ENCODE measurements at regions of chr5 and their contacts with region 1.

Region 1: DNA sequence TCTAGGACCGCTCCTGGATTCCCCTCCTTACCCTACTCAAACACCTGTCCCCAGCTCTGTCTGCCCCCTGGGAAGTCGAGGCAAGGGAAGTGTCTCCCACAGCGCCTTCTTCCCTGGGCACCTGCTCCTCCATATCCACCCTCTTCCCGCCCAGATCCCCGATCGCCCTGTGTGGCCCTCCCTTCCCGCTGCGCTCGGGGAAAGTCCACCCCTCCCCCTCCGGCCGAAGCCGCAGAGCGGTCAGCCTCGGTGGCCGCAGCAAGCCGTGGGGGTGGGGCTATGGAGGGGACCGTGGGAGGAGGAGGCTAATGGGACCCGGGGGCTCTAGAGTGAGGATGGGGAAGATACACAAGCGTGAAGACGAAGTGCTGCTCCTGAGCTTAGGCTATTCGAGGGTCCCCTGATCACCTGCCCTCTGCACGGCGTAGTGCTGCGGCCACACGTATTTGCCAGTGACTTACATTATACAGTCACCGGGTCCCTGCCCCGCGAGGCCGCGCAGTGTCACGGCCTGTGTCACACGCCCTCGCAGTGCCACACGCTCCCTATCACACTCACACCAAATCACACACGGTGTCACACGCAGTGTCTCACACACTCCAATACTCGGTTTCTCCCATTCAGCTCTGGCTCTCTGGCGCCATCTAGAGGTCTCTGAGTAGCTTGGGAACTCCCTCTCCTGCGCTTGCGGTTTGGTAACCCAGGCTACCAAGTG is 658 bp upstream of the PCDH1 start:
- DNase-seq: peak; percentile 100
- H3K4me3 Mint-ChIP-seq: peak overlapping the region; percentile 80
- H3K27ac Mint-ChIP-seq: no peak overlapping the region
- H3K4me1 Mint-ChIP-seq: peaks cover 30% of the 10 kb centered on the region
- H3K27me3 Mint-ChIP-seq: peaks cover 55% of the 10 kb centered on the region
- CTCF ChIP-seq: peak; percentile 99

Region 2: DNA sequence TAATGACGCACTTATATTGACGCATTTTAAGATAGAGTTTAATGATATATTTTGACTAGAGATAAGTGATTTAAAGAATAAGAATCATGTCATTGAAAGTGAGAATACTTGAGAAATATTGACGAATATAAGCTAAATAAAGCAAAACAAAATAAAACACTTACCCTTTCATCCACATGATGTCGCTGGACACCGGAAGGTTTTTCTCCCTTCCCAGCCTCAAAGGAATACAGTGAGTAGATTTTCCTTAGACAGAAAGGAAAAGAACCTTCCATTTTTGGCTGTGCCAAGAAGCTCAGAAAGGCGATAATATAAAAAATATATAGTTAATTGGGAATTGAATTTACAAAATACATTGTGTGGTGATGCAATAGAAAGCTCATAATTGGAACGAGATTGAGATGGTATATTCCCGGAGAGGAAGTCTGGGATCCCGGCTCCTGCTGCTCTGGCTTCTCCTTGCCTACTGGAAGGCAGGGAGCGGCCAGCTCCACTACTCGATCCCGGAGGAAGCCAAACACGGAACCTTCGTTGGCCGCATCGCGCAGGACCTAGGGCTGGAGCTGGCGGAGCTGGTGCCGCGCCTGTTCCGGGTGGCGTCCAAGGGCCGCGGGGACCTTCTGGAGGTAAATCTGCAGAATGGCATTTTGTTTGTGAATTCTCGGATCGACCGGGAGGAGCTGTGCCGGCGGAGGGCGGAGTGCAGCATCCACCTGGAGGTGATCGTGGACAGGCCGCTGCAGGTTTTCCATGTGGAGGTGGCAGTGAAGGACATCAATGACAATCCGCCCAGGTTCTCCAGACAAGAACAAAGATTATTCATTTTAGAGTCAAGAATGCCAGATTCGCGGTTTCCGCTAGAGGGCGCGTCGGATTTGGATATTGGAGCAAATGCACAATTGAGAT is 1057.2 kb before region 1 on chr5 and contains the start of gene PCDHA5:
- CTCF ChIA-PET with region 1: no interaction called
- POLR2A ChIA-PET with region 1: no interaction called
- intact Hi-C with region 1: no loop called
- DNase-seq: peak; percentile 17
- H3K4me3 Mint-ChIP-seq: no peak within 1 kb of the TSS
- H3K27ac Mint-ChIP-seq: no peak within 1 kb of the TSS
- H3K4me1 Mint-ChIP-seq: no peaks in the 10 kb centered on the region
- H3K27me3 Mint-ChIP-seq: peaks cover 2% of the 10 kb centered on the region
- CTCF ChIP-seq: peak; percentile 19
- total RNA-seq, gene PCDHA5: 0.12 and 0.22 TPM in 2 replicates

Region 3: GRCh38 chr5:141598391-141599350 is 280.2 kb before region 1 on chr5:
- CTCF ChIA-PET with region 1: interaction called, 5 read pairs
- POLR2A ChIA-PET with region 1: no interaction called
- intact Hi-C with region 1: loop called (anchors 2 kb)
- DNase-seq: no peak
- H3K4me3 Mint-ChIP-seq: no peak overlapping the region
- H3K27ac Mint-ChIP-seq: peak overlapping the region; percentile 6
- H3K4me1 Mint-ChIP-seq: peaks cover 20% of the 10 kb centered on the region
- H3K27me3 Mint-ChIP-seq: no peaks in the 10 kb centered on the region
- CTCF ChIP-seq: no peak

Region 4: DNA sequence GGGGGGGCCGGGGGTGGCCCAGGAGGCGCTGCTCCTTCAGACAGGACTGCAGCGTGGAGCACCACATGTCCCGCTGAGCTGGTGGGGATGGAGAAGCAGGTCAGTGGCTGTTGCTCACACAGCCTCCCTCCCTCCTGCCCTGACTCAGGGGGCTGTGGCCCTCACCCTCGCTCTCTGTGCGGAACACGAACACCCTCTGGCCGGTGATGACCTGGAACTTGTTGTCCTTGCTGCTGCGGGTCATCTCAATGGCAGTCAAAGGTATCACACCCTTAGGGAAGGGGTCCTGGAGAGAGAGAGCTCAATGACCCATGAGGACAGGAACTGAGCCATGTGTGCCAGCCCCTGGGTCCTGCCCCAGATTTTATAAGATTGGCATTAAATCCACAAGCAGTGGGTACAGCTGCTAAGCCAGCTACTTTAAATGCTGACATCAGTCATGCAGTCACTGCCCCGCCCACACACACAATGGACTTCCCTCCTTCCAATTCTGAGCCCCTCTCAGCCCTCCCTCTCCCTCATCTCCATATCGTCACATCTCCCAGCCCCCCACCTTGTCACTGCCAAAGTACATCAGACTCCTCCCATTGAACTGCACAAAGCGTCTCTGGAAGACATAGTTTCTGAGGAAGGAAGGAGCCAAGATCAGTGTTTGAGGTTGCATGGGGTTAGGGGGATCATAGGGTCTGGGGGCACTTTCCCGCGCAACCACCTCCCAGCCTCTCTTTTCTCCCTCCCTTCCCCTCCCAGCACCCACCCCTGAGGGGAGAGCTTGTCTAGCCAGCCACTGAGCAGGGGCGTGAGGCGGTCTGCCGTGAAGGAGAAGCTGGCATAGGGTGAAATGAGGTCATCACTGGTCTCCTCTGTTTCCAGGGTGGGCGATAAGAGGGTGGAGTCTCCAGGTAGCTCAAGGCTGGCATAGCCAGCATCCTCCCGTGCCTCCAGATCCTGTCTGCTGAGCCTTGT is 205.7 kb before region 1 on chr5:
- CTCF ChIA-PET with region 1: interaction called, 72 read pairs
- POLR2A ChIA-PET with region 1: interaction called, 4 read pairs
- intact Hi-C with region 1: no loop called
- DNase-seq: no peak
- H3K4me3 Mint-ChIP-seq: no peak overlapping the region
- H3K27ac Mint-ChIP-seq: no peak overlapping the region
- H3K4me1 Mint-ChIP-seq: no peaks in the 10 kb centered on the region
- H3K27me3 Mint-ChIP-seq: no peaks in the 10 kb centered on the region
- CTCF ChIP-seq: no peak

Region 5: GRCh38 chr5:141713616-141714309 is 165.1 kb before region 1 on chr5:
- CTCF ChIA-PET with region 1: interaction called, 37 read pairs
- POLR2A ChIA-PET with region 1: interaction called, 13 read pairs
- intact Hi-C with region 1: no loop called
- DNase-seq: peak; percentile 96
- H3K4me3 Mint-ChIP-seq: peak overlapping the region; percentile 5
- H3K27ac Mint-ChIP-seq: peak overlapping the region; percentile 73
- H3K4me1 Mint-ChIP-seq: peaks cover 37% of the 10 kb centered on the region
- H3K27me3 Mint-ChIP-seq: no peaks in the 10 kb centered on the region
- CTCF ChIP-seq: no peak

Region 6: GRCh38 chr5:141811287-141812155 is 67.3 kb before region 1 on chr5:
- CTCF ChIA-PET with region 1: interaction called, 55 read pairs
- POLR2A ChIA-PET with region 1: interaction called, 3 read pairs
- intact Hi-C with region 1: loop called (anchors 1 kb)
- DNase-seq: peak; percentile 32
- H3K4me3 Mint-ChIP-seq: no peak overlapping the region
- H3K27ac Mint-ChIP-seq: no peak overlapping the region
- H3K4me1 Mint-ChIP-seq: no peaks in the 10 kb centered on the region
- H3K27me3 Mint-ChIP-seq: peaks cover 31% of the 10 kb centered on the region
- CTCF ChIP-seq: peak; percentile 74

Region 7: DNA sequence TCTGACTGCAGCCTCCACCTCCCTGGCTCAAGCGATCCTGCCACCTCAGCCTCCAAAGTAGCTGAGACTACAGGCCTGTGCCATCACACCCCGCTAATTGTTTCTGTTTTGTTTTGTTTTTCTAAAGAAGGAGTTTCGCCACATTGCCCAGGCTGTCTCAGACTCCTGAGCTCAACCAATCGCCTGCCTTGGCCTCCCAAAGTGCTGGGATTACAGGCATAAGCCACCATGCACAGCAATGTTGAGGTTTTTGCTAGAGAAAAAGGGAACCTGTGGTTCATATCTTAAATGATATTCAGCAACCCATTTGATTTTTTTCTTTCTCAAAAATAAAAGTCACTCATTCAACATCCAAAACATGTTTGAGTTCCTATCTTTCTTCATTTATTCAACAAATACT is 24.4 kb after region 1 on chr5:
- CTCF ChIA-PET with region 1: interaction called, 32 read pairs
- POLR2A ChIA-PET with region 1: interaction called, 3 read pairs
- intact Hi-C with region 1: no loop called
- DNase-seq: no peak
- H3K4me3 Mint-ChIP-seq: no peak overlapping the region
- H3K27ac Mint-ChIP-seq: no peak overlapping the region
- H3K4me1 Mint-ChIP-seq: no peaks in the 10 kb centered on the region
- H3K27me3 Mint-ChIP-seq: no peaks in the 10 kb centered on the region
- CTCF ChIP-seq: no peak

Region 8: DNA sequence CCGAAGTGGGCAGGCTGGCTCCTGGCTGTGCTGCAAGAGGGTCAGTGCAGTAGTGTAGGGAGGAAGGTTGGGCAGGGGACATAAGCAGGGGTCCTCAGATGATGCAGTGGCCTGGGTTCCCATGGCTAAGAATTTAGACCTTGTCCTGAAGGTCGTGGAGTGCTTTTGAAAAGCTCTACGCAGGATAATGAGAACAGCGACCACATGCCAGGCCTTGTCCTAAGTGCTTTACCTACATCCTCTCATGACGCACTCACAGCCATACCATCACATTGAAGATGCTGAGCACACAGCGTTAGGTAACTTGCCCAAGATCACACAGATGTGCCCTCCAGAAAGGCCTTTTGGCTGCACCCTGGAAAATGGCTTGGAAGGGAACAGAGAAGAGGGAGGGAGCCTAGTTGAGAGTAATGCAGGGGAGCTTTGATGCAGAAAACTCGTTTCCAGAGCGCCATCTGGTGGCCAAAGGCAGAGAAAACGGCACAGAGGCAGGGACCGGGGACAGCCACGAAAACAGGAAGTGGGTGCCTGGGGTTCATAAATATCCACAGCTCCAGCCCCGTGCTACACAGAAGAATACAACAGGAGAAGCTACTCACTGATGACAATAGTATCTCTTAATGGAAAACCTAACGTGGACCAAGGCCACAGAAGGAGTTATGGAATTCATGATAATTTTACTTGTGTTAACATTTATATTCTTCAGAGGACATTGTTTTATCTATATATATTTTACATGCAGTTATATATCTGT is 81.8 kb after region 1 on chr5:
- CTCF ChIA-PET with region 1: interaction called, 519 read pairs
- POLR2A ChIA-PET with region 1: interaction called, 12 read pairs
- intact Hi-C with region 1: no loop called
- DNase-seq: peak; percentile 96
- H3K4me3 Mint-ChIP-seq: no peak overlapping the region
- H3K27ac Mint-ChIP-seq: peak overlapping the region; percentile 68
- H3K4me1 Mint-ChIP-seq: peaks cover 19% of the 10 kb centered on the region
- H3K27me3 Mint-ChIP-seq: no peaks in the 10 kb centered on the region
- CTCF ChIP-seq: peak; percentile 87